ENCODE measurements at regions of chr21 and their contacts with region 1.

Region 1: DNA sequence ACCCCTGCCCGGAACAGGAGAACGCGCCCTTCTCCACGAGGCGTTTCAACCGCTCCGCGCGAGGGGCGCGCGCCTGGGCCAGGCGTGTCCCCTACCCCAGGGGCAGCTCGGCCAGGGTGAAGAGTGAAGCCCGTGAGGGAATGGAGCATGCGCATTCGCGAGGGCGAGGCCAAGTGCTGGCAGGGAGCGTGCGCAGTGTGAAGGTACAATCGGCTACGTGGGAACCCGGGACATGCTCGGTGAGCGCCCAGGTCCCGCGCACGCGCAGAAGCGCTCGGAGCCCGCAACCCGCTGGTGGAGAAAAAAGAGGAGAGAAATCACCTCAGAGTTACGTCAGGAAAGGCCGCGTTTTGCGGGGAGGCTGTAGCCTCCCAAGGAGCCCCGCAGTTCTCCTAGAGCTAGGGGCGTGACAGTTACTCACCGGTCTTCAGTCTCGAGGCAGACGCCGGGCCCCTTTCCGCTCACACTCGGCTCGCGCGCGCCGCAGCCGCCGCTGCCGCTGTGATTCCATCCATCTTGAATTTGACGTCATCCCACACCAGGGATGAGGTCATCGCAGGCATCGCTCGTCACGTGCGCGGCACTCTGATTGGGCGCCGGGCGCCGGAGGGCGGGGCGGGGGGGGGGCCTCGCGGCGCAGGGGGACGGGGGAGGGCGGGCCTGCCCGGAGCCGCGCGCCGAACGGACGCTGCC is at the start of gene ZBTB21:
- DNase-seq: peak; percentile 88 to 96
- H3K4me3 ChIP-seq: peak within 1 kb of the TSS; percentile 85
- H3K27ac ChIP-seq: peak within 1 kb of the TSS; percentile 90
- H3K4me1 ChIP-seq: peaks cover 15% of the 10 kb centered on the region
- H3K27me3 ChIP-seq: no peaks in the 10 kb centered on the region
- CTCF ChIP-seq: no peak
- total RNA-seq, gene ZBTB21: 9.1 and 13.5 TPM in 2 replicates

Region 2: GRCh38 chr21:41933313-41934086 is 76.5 kb before region 1 on chr21:
- CTCF ChIA-PET with region 1: no interaction called
- POLR2A ChIA-PET with region 1: no interaction called
- intact Hi-C with region 1: loop called (anchors 2 kb)
- DNase-seq: peak in 1 of 2 experiments; percentile 13
- H3K4me3 ChIP-seq: no peak overlapping the region
- H3K27ac ChIP-seq: no peak overlapping the region
- H3K4me1 ChIP-seq: no peaks in the 10 kb centered on the region
- H3K27me3 ChIP-seq: no peaks in the 10 kb centered on the region
- CTCF ChIP-seq: no peak

Region 3: GRCh38 chr21:42107881-42108553 is 98.0 kb after region 1 on chr21:
- CTCF ChIA-PET with region 1: no interaction called
- POLR2A ChIA-PET with region 1: interaction called, 3 read pairs
- intact Hi-C with region 1: loop called (anchors 2 kb)
- DNase-seq: peak; percentile 50 to 65
- H3K4me3 ChIP-seq: no peak overlapping the region
- H3K27ac ChIP-seq: no peak overlapping the region
- H3K4me1 ChIP-seq: no peaks in the 10 kb centered on the region
- H3K27me3 ChIP-seq: no peaks in the 10 kb centered on the region
- CTCF ChIP-seq: peak; percentile 71

Region 4: GRCh38 chr21:42125571-42126544 is 115.9 kb after region 1 on chr21:
- CTCF ChIA-PET with region 1: no interaction called
- POLR2A ChIA-PET with region 1: no interaction called
- intact Hi-C with region 1: no loop called
- DNase-seq: peak in 1 of 2 experiments; percentile 72
- H3K4me3 ChIP-seq: no peak overlapping the region
- H3K27ac ChIP-seq: no peak overlapping the region
- H3K4me1 ChIP-seq: peaks cover 12% of the 10 kb centered on the region
- H3K27me3 ChIP-seq: no peaks in the 10 kb centered on the region
- CTCF ChIP-seq: peak; percentile 49; the same call in 1 of the 2 replicates